Mammary epithelial cell (primary cell): ENCODE measurements at regions of chr3 and their contacts with region 1.

Region 1: GRCh38 chr3:16801698-16802097 is 83.1 kb upstream of the PLCL2 start:
- DNase-seq: no peak
- H3K4me3 ChIP-seq: no peak overlapping the region
- H3K27ac ChIP-seq: no peak overlapping the region
- H3K4me1 ChIP-seq: no peaks in the 10 kb centered on the region
- H3K27me3 ChIP-seq: no peaks in the 10 kb centered on the region
- CTCF ChIP-seq: no peak

Region 2: GRCh38 chr3:16622932-16623331 is 178.8 kb before region 1 on chr3:
- CTCF ChIA-PET with region 1: no interaction called
- dilution Hi-C with region 1: loop called (anchors 10 kb)
- in situ Hi-C with region 1: no loop called
- intact Hi-C with region 1: no loop called
- DNase-seq: no peak
- H3K4me3 ChIP-seq: no peak overlapping the region
- H3K27ac ChIP-seq: no peak overlapping the region
- H3K4me1 ChIP-seq: no peaks in the 10 kb centered on the region
- H3K27me3 ChIP-seq: peaks cover 4% of the 10 kb centered on the region
- CTCF ChIP-seq: no peak